ENCODE measurements at regions of chr6 and their contacts with region 1.

Region 1: GRCh38 chr6:26175428-26176181 is 88.4 kb downstream of the HFE start:
- DNase-seq: peak; percentile 72
- H3K4me3 Mint-ChIP-seq: peak overlapping the region; percentile 30
- H3K27ac Mint-ChIP-seq: peak overlapping the region; percentile 79
- H3K4me1 Mint-ChIP-seq: peaks cover 70% of the 10 kb centered on the region
- H3K27me3 Mint-ChIP-seq: no peaks in the 10 kb centered on the region
- CTCF ChIP-seq: peak; percentile 69

Region 2: DNA sequence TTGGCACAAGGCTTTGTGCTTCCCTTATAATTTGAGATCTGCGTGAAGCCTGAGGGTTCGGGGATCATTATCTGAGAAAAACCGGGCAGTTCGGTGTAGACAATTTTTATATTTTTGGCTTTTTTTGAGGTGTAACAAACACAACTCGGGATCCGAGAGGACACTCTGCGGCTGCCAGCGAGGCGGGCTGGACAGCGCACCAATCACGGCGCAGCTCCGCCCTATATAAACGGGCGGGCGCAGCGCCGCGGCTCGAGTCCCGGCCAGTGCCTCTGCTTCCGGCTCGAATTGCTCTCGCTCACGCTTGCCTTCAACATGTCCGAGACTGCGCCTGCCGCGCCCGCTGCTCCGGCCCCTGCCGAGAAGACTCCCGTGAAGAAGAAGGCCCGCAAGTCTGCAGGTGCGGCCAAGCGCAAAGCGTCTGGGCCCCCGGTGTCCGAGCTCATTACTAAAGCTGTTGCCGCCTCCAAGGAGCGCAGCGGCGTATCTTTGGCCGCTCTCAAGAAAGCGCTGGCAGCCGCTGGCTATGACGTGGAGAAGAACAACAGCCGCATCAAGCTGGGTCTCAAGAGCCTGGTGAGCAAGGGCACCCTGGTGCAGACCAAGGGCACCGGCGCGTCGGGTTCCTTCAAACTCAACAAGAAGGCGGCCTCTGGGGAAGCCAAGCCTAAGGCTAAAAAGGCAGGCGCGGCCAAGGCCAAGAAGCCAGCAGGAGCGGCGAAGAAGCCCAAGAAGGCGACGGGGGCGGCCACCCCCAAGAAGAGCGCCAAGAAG is 19.3 kb before region 1 on chr6:
- CTCF ChIA-PET with region 1: interaction called, 5 read pairs
- intact Hi-C with region 1: loop called (anchors 2 kb)
- DNase-seq: peak; percentile 93
- H3K4me3 Mint-ChIP-seq: peak overlapping the region; percentile 85
- H3K27ac Mint-ChIP-seq: peak overlapping the region; percentile 100
- H3K4me1 Mint-ChIP-seq: peaks cover 51% of the 10 kb centered on the region
- H3K27me3 Mint-ChIP-seq: peaks cover 17% of the 10 kb centered on the region
- CTCF ChIP-seq: no peak

Region 3: DNA sequence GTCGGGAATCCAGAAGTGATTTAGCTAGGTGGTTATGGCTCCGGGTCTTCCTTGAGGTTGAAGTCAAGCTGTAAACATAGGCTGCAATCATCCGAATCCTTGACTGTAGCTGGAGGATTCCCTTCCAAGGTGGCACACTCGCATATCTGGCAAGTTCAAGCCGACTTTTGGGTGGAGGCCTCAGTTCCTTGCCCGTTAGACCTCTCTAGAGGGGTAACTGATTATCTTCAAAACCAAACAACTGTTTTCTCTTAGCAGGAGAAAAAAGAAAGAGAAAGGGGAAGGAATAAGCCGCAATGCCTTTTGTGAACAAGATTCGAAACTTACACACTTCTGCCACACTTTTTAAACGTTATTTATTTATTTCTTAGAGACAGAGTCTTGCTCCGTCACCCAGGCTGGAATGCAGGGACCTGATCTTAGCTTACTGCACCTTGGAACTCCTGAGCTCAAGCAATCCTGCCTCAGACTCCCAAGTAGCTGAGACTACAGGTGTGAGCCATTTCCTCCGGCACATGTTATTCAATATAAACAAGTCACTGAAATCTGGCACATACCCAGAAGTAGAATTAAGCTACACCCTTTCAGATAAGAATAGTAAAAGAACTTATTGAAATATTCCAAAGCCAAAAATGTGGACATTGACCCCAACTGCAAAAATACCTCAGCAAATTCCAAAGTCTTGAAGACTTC is 12.0 kb before region 1 on chr6:
- CTCF ChIA-PET with region 1: interaction called, 12 read pairs
- intact Hi-C with region 1: loop called (anchors 2 kb)
- DNase-seq: peak; percentile 63
- H3K4me3 Mint-ChIP-seq: peak overlapping the region; percentile 85
- H3K27ac Mint-ChIP-seq: peak overlapping the region; percentile 100
- H3K4me1 Mint-ChIP-seq: peaks cover 57% of the 10 kb centered on the region
- H3K27me3 Mint-ChIP-seq: no peaks in the 10 kb centered on the region
- CTCF ChIP-seq: no peak

Measured in Calu3 (cell line).